K562 (cell line): ENCODE measurements at regions of chrX and their contacts with region 1.

Region 1: DNA sequence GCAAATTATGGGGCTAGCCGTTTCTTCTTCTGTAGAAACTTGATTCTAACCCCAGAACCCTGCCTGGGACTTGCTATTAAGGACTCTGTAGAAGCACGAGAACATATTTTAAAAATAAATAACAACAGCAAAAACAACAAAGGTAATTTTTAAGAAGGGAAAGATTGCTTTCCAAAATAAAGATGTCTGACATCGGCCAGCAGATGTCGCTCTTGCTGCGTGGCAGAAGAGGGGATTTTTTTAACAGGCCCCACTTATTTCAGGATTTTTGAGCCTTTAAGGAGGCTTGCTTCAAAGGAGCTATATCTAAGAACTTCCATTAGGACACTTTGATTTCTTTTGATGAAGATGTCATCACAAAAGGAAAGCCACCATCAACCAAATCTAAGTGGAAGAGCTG is 62.8 kb upstream of the EGFL6 start:
- DNase-seq: peak; percentile 54 to 66 (median 58)
- ATAC-seq: no peak
- H3K4me3 ChIP-seq: no peak overlapping the region
- H3K27ac ChIP-seq: no peak overlapping the region
- H3K4me1 ChIP-seq: no peaks in the 10 kb centered on the region
- H3K27me3 ChIP-seq: no peaks in the 10 kb centered on the region
- CTCF ChIP-seq: peak; percentile 64 to 84 (median 67)
- EP300 ChIP-seq: no peak
- POLR2A ChIP-seq: no peak
- RAD21 ChIP-seq: peak; percentile 86 to 88

Region 2: GRCh38 chrX:13816643-13817627 is 310.4 kb after region 1 on chrX and contains the start of gene GPM6B:
- CTCF ChIA-PET with region 1: no interaction called
- POLR2A ChIA-PET with region 1: no interaction called
- in situ Hi-C with region 1: no loop called
- intact Hi-C with region 1: loop called (anchors 5 kb)
- DNase-seq: no peak
- ATAC-seq: no peak
- H3K4me3 ChIP-seq: no peak within 1 kb of the TSS
- H3K27ac ChIP-seq: no peak within 1 kb of the TSS
- H3K4me1 ChIP-seq: no peaks in the 10 kb centered on the region
- H3K27me3 ChIP-seq: peaks cover 3 to 5% of the 10 kb centered on the region in 2 experiments; a peak in 3 of 5 replicates
- CTCF ChIP-seq: no peak
- EP300 ChIP-seq: no peak
- POLR2A ChIP-seq: no peak
- RAD21 ChIP-seq: no peak
- polyA plus RNA-seq, gene GPM6B: 0.14 to 0.32 TPM